ENCODE measurements at regions of chr17 and their contacts with region 1.

Region 1: DNA sequence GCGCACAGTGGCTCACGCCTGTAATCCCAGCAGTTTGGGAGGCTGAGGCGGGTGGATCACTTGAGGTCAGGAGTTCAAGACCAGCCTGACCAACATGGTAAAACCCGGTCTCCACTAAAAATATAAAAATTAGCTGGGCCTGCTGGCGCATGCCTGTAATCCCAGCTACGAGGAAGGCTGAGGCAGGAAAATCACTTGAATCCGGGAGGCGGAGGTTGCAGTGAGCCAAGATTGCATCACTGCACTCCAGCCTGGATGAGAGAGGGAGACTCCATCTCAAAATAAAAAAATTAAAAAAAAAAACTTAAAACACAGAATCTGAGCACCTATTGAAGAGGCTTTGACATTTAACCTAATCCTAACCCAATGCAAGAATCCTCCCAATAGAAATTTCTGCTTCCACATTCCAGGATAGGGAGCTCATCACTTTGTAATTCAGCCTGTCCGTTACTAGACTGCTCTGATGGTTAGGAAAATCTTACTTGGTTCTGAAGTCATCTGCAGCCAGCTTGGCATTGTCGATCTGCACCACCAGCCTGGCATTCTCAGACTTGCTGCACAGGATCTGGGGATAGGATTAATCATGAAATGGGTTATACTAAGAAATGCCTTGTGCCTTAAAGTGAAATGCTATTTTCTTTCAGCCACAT is 2.1 kb downstream of the KRT33B start:
- DNase-seq: no peak
- H3K4me3 ChIP-seq: no peak overlapping the region
- H3K27ac ChIP-seq: no peak overlapping the region
- H3K4me1 ChIP-seq: no peaks in the 10 kb centered on the region
- H3K27me3 ChIP-seq: no peaks in the 10 kb centered on the region
- CTCF ChIP-seq: no peak
- POLR2A ChIP-seq: no peak

Region 2: DNA sequence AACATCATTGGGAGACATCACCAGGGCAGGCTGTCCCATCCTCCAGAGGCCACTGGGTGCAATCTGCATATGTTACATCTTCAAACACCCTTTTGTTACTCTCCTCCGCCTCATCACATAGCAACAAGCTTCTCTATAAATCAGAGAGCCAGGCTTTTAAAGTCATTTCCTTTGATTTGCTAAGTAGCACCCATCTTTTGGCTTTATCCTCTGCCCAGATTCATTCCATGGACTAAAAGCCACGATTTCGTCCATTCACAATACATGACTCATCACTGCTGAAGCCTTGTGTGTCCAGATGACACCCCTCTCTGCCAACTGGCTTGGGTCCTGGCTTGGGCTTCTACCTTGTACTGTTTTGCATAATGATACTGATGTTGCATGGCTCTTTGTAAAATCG is 75.2 kb after region 1 on chr17:
- intact Hi-C with region 1: loop called (anchors 10 kb)
- DNase-seq: no peak
- H3K4me3 ChIP-seq: no peak overlapping the region
- H3K27ac ChIP-seq: no peak overlapping the region
- H3K4me1 ChIP-seq: no peaks in the 10 kb centered on the region
- H3K27me3 ChIP-seq: no peaks in the 10 kb centered on the region
- CTCF ChIP-seq: no peak
- POLR2A ChIP-seq: no peak